OCI-LY7 (cell line): ENCODE measurements at regions of chr3 and their contacts with region 1.

Region 1: DNA sequence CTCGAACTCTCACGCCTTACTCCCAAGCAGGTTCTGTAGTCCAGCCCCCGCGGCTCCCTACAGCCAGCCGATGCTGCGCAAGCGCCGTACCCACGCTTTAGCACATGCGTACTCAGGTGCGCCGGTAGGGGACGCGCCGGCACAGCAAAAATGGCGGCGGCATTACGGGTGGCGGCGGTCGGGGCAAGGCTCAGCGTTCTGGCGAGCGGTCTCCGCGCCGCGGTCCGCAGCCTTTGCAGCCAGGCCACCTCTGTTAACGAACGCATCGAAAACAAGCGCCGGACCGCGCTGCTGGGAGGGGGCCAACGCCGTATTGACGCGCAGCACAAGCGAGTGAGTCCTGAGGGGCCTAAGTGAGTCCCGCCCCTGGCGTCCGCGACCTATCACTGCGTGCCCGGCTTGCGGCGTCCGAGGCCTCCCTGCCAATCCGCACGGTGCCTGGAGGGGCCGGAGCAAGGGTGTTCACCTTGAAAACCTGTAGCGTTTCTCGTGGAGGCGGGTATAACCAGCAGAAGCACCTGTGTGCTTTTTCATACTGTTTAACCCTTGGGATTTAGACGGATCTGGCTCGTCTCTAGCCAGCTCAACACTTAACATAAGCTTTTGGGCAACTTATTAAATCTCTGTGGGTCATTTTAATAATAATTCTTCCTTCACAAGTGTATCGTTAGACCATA is at the start of gene PCCB:
- DNase-seq: peak; percentile 96
- H3K4me3 ChIP-seq: peak within 1 kb of the TSS; percentile 71
- H3K27ac ChIP-seq: peak within 1 kb of the TSS; percentile 83
- H3K4me1 ChIP-seq: peaks cover 61% of the 10 kb centered on the region
- CTCF ChIP-seq: peak; percentile 78
- total RNA-seq, gene PCCB: 38.3 and 39.7 TPM in 2 replicates

Region 2: GRCh38 chr3:136239094-136239493 is 11.3 kb before region 1 on chr3:
- CTCF ChIA-PET with region 1: no interaction called
- POLR2A ChIA-PET with region 1: interaction called, 13 read pairs
- intact Hi-C with region 1: no loop called
- DNase-seq: no peak
- H3K4me3 ChIP-seq: no peak overlapping the region
- H3K27ac ChIP-seq: no peak overlapping the region
- H3K4me1 ChIP-seq: no peaks in the 10 kb centered on the region
- CTCF ChIP-seq: no peak

Region 3: DNA sequence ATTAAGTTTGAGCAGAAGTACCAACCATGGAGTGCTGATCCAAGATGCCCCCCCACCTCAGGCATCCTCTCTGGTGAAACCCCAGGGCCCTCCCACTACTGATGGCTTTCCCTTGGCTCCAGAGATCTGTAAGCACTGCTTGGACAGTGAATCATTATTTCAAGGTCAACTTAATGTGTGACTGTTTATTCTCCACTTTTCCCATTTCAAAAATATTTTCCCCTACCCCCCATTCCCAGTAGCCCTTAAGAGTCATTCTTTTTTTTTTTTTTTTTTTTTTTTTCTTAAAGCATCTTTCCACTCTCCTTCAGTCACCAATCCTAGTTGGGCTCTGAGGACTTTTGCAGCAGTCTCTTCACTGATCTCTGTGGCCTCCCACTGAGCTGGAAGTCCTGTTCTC is 82.4 kb after region 1 on chr3:
- CTCF ChIA-PET with region 1: no interaction called
- POLR2A ChIA-PET with region 1: no interaction called
- intact Hi-C with region 1: no loop called
- DNase-seq: no peak
- H3K4me3 ChIP-seq: no peak overlapping the region
- H3K27ac ChIP-seq: no peak overlapping the region
- H3K4me1 ChIP-seq: no peaks in the 10 kb centered on the region
- CTCF ChIP-seq: no peak

Region 4: GRCh38 chr3:136385457-136385856 is 135.1 kb after region 1 on chr3:
- CTCF ChIA-PET with region 1: no interaction called
- POLR2A ChIA-PET with region 1: no interaction called
- intact Hi-C with region 1: no loop called
- DNase-seq: no peak
- H3K4me3 ChIP-seq: no peak overlapping the region
- H3K27ac ChIP-seq: no peak overlapping the region
- H3K4me1 ChIP-seq: no peaks in the 10 kb centered on the region
- CTCF ChIP-seq: no peak

Region 5: DNA sequence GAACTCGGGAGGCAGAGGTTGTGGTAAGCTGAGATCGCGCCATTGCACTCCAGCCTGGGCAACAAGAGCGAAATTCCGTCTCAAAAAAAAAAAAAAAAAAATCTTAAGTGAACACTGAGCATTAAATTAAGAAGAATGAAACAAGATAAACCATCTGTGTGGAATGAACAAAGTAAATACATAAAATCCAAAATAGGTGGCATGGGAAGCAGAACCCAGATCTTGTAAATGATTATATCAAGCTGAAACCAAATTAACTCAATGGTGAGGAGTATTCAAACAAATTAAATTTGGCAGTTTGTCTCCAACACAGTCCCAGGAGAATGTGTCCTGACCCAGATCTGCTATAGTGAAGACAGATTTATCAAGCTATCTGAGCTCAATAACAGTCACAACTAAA is 469.7 kb after region 1 on chr3:
- CTCF ChIA-PET with region 1: interaction called, 3 read pairs
- POLR2A ChIA-PET with region 1: interaction called, 11 read pairs
- intact Hi-C with region 1: no loop called
- DNase-seq: no peak
- H3K4me3 ChIP-seq: no peak overlapping the region
- H3K27ac ChIP-seq: no peak overlapping the region
- H3K4me1 ChIP-seq: no peaks in the 10 kb centered on the region
- CTCF ChIP-seq: no peak